Mammary epithelial cell (primary cell): ENCODE measurements at regions of chr5 and their contacts with region 1.

Region 1: DNA sequence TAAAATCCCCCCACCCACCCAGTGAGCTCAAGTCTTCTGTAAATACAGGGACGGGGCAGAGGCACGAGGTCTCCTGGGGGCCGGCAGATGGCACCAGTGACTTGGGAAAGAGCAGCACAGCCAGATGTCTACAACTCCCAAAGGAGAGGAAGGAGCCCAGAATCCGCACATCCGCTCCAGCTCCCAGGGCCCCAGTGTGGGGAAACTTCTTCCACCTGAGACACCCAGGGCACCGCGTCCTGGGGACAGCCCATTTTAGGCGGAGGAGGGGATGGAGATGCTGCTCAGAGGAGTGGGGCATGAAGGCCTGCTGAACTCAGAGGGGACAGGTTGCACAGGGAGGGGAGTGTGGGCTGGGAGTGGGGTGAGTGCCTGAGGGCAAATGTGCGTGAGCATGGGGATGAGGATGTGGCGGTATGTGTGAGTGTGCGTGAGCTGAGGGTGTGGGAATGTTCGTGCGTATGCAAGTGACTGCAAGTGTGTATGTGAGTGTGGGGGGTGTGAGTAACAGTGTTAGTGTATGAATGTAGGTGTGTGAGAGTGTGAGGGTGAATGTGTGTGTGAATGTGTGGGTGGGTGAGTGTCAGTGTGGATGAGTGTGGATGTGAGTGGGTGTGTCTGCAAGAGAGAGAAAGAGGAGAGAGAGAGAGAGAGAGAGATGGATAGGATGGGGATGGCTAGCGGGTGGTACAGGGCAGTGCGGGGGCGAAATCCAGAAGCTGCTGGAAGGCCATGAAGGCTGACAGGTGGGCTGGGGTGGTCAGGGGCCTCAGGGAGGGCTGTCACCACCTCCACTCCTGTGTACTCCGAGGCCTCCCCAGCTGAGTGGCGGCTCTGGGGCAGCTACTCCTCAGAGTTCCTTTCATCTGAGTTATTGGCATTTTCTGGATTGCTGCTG is 63.5 kb downstream of the DUSP1 start:
- DNase-seq: peak; percentile 56
- H3K4me3 ChIP-seq: no peak overlapping the region
- H3K27ac ChIP-seq: no peak overlapping the region
- H3K4me1 ChIP-seq: no peaks in the 10 kb centered on the region
- H3K27me3 ChIP-seq: peaks cover 3% of the 10 kb centered on the region
- CTCF ChIP-seq: peak; percentile 60 to 71

Region 2: GRCh38 chr5:172640822-172641358 is 66.6 kb before region 1 on chr5 and contains the start of gene NEURL1B:
- CTCF ChIA-PET with region 1: no interaction called
- dilution Hi-C with region 1: no loop called
- in situ Hi-C with region 1: no loop called
- intact Hi-C with region 1: no loop called
- DNase-seq: peak; percentile 66
- H3K4me3 ChIP-seq: peak within 1 kb of the TSS; percentile 45 to 62 (median 57)
- H3K27ac ChIP-seq: peak within 1 kb of the TSS; percentile 8
- H3K4me1 ChIP-seq: peaks cover 27% of the 10 kb centered on the region
- H3K27me3 ChIP-seq: no peaks in the 10 kb centered on the region
- CTCF ChIP-seq: peak in 1 of 2 donors; percentile 19
- total RNA-seq, gene NEURL1B: 0.50 to 2.9 TPM

Region 3: DNA sequence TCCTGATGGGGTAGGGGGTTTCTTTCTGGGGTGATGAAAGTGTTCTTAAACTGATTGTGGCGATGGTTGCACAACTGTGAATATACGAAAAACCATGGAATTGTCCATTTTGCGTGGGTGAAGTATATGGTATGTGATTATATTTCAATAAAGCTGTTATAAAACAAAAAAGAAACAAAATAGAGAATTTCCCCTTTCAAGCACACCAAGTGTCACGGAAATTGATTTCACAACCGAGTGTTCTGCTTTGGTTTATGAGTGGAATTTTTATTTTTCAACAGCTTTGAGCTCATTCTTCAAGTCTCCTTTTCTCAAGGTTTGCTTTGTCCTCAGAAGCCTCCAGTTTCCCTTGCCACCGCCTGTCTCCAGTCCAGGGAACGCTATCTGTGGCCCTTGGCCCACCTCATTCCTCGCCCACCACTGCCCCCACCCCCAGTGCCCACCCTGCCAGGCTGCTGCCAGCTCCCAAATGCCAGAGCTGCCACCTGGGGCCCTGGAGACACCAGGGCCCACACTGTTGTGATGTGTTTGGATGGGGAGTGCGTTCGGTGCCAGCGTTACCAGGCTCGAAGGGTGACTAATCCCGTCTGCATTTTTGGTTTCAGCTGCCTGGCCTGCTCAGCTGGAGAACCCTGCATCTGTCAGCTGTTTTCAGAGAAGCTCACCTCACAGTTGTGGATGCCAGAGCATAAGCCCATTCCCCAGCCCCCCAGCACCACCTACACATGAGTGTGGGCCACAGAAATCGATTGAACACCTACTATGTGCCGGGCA is 33.1 kb after region 1 on chr5:
- CTCF ChIA-PET with region 1: interaction called, 14 read pairs
- dilution Hi-C with region 1: no loop called
- in situ Hi-C with region 1: no loop called
- intact Hi-C with region 1: no loop called
- DNase-seq: peak; percentile 92
- H3K4me3 ChIP-seq: no peak overlapping the region
- H3K27ac ChIP-seq: peak overlapping the region; percentile 87
- H3K4me1 ChIP-seq: peaks cover 13% of the 10 kb centered on the region
- H3K27me3 ChIP-seq: no peaks in the 10 kb centered on the region
- CTCF ChIP-seq: no peak

Region 4: DNA sequence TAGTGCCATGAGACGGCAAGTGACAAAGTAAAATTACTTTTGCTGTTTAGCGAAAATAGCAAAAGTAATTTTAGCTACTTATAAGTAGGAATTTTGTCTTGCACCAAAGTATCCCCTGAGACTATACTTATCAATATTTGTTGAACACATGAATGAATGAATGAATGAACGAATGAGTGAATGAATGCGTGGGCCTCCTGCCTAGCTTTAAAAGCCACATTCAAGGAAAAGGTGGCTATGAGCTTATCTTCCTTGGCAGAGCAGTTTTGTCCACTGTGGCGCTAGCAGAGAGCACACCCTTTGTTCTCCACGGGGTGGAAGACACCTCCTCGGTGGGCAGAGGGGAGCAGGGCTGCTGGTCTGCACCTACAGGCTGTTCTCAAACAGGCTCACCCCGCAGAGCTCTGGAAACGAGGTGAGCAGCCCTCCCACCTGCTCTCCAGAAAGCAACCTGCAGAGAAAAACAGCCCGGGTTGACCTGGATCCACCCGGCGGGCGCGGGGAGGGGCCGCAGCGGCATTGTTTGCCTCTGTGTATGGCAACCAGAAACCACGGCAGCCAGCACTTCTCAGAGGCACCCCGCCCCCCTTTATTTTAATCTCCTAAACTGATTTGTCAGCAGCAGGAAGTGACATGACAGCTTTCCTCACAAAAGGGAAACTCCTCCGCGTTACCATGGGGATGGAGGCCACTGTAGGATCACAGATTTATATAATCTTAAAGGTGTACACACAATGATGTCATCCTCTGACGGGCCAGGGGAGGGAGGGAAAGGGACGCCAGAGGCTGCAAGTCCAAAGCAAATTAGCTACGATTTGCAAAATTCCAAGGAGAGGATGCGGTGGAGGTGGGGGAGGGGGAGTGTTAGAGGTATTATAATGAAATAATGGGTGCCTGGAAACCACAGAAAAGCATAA is 57.6 kb after region 1 on chr5:
- CTCF ChIA-PET with region 1: interaction called, 17 read pairs
- dilution Hi-C with region 1: no loop called
- in situ Hi-C with region 1: no loop called
- intact Hi-C with region 1: no loop called
- DNase-seq: peak; percentile 99
- H3K4me3 ChIP-seq: peak overlapping the region; percentile 16 to 52 (median 38)
- H3K27ac ChIP-seq: peak overlapping the region; percentile 95
- H3K4me1 ChIP-seq: peaks cover 42% of the 10 kb centered on the region
- H3K27me3 ChIP-seq: no peaks in the 10 kb centered on the region
- CTCF ChIP-seq: no peak

Region 5: DNA sequence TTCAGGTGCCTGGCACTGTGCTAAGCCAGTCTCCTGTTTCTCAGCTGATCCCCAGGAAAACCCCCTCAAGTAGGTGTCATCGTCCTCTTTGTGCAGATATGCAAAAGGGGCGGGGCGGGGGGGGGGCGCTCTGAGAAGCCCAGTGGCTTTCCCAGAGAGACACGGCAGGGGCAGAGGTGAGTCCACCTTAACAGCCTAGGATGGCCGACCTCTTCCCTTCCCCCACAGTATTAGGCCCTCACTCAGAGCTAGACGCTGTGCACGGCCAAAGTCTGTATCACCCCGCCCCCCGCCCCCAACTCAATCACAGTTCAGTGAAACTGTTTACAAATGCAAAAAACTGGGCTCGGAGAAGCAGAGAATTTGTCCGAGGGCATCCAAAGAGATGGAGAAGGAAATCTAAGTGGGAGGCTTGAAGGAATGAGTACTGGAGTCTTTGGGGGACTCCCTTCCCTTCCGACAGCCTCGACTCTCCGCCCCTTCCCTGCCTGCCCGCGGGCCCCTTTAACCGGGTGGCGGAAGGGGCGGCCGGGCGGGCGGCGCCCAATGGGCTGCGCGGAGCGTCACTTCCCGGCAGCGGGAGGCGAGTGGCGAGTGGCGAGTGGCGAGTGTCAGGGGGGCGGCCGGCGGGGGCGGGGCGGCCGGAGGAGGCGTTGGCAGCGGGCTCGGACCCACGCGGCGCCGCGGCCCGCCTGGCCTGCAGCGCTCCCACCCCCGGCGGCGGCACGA is 126.3 kb after region 1 on chr5 and contains the start of gene ERGIC1:
- CTCF ChIA-PET with region 1: no interaction called
- dilution Hi-C with region 1: no loop called
- in situ Hi-C with region 1: no loop called
- intact Hi-C with region 1: no loop called
- DNase-seq: peak; percentile 78
- H3K4me3 ChIP-seq: peak within 1 kb of the TSS; percentile 73 to 87 (median 82)
- H3K27ac ChIP-seq: peak within 1 kb of the TSS; percentile 72
- H3K4me1 ChIP-seq: peaks cover 8% of the 10 kb centered on the region
- H3K27me3 ChIP-seq: no peaks in the 10 kb centered on the region
- CTCF ChIP-seq: no peak
- total RNA-seq, gene ERGIC1: 58.8 to 98.6 TPM

Region 6: GRCh38 chr5:173163219-173163618 is 455.7 kb after region 1 on chr5:
- CTCF ChIA-PET with region 1: no interaction called
- dilution Hi-C with region 1: no loop called
- in situ Hi-C with region 1: no loop called
- intact Hi-C with region 1: loop called (anchors 10 kb)
- DNase-seq: no peak
- H3K4me3 ChIP-seq: no peak overlapping the region
- H3K27ac ChIP-seq: no peak overlapping the region
- H3K4me1 ChIP-seq: no peaks in the 10 kb centered on the region
- H3K27me3 ChIP-seq: no peaks in the 10 kb centered on the region
- CTCF ChIP-seq: no peak

Region 7: DNA sequence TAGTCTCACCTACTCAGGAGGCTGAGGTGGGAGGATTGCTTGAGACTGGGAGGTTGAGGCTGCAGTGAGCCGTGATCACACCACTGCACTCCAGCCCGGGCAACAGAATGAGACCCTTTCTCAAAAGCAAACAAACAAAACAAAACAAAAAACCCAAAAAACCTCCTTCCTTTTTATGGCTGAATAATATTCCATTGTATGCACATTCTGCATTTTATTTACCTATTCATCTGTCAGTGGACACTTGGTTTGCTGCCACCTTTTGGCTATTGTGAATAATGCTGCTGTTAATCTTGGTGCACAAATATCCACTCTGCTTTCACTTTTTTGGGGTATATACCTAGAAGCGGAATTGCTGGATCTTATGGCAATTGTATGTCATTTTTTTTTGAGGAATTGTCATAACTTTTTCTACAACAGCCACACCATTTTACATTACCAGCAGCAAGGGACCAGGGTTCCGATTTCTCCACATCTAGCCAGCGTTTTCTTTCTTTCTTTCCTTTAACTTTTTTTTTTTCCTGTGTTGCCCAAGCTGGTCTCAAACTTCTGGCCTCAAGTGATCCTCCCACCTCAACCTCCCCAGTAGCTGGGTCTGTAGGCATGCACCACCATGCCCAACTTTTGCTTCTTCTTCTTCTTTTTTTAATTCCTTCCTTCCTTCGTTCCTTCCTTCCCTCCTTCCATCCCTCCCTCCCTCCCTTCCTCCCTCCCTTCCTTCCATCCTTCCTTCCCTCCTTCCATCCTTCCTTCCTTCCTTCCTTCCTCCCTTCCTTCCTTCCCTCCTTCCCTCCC is 496.8 kb after region 1 on chr5:
- CTCF ChIA-PET with region 1: no interaction called
- dilution Hi-C with region 1: no loop called
- in situ Hi-C with region 1: no loop called
- intact Hi-C with region 1: loop called (anchors 1 kb)
- DNase-seq: peak; percentile 12
- H3K4me3 ChIP-seq: no peak overlapping the region
- H3K27ac ChIP-seq: no peak overlapping the region
- H3K4me1 ChIP-seq: peaks cover 11% of the 10 kb centered on the region
- H3K27me3 ChIP-seq: no peaks in the 10 kb centered on the region
- CTCF ChIP-seq: peak; percentile 45 to 66

Region 8: DNA sequence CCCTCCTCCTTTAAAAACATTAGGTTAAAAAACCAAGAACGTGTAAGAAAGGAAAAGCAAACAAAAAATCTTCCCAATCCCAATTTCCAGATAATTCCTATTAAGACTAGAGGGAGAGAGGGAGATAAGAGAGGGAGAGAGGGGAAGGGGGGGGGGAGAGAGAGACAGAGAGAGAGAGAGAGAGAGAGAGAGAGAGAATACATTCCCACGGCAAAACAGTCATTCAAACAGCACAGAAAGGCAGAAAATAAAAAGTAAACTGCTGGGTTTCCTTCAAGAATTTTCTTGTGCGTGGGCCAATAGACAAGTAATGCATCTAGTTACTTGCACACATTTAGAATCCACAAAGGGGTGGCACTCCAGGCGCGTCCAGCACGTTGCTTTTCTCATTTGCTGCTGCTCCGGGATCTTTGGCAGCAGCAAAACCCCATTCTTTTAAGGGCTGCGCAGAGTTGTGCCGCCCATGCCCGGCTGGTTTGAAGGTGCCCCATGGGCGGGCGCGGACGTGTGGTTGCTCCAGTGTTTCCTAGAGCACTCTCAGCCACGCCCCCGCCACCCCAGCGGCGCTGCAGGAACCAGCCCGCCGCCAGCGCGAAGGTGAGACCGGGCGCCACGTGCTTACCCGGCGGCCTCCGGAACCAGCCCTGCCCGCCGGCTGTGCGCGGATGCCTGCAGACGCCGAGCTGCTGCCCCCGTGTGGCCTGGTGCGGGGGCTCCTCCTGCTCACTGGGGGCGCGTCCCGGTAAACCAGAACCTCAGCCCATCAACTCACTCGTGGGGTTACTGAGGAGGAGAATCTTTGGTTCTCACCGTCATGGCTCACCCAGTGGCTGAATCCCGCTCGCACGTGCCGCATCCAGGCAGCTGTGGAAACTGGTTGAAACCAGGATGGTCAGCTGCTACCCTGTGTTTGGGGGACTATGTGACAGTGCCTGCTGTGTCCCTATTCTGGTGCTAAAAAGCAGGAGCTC is 576.1 kb after region 1 on chr5:
- CTCF ChIA-PET with region 1: interaction called, 3 read pairs
- dilution Hi-C with region 1: loop called (anchors 25 kb)
- in situ Hi-C with region 1: loop called in 1 of 2 experiments (anchors 25 kb)
- intact Hi-C with region 1: loop called (anchors 2 kb)
- DNase-seq: peak; percentile 75
- H3K4me3 ChIP-seq: peak overlapping the region; percentile 24 to 33 (median 24)
- H3K27ac ChIP-seq: no peak overlapping the region
- H3K4me1 ChIP-seq: peaks cover 9% of the 10 kb centered on the region
- H3K27me3 ChIP-seq: no peaks in the 10 kb centered on the region
- CTCF ChIP-seq: peak; percentile 59 to 71